Activated CD8-positive, alpha-beta T cell treated with anti-CD3 and anti-CD28 coated beads, Interleukin-2, amount 10 ng/mL, durations not matched to agents 7 days and 5 days (primary cell): ENCODE measurements at regions of chr16 and their contacts with region 1.

Region 1: GRCh38 chr16:88785106-88785924 is at the start of gene PIEZO1:
- DNase-seq: peak; percentile 83
- ATAC-seq: peak; percentile 58
- H3K4me3 Mint-ChIP-seq: peak within 1 kb of the TSS; percentile 87
- H3K27ac Mint-ChIP-seq: peak within 1 kb of the TSS; percentile 82
- H3K4me1 Mint-ChIP-seq: peaks cover 52% of the 10 kb centered on the region
- H3K27me3 Mint-ChIP-seq: no peaks in the 10 kb centered on the region
- total RNA-seq, gene PIEZO1: 226 to 230 TPM

Region 2: GRCh38 chr16:88700636-88701482 is 84.5 kb before region 1 on chr16:
- CTCF ChIA-PET with region 1: interaction called, 10 read pairs
- POLR2A ChIA-PET with region 1: interaction called, 13 read pairs
- DNase-seq: peak; percentile 98
- ATAC-seq: peak; percentile 71
- H3K4me3 Mint-ChIP-seq: peak overlapping the region; percentile 99
- H3K27ac Mint-ChIP-seq: peak overlapping the region; percentile 100
- H3K4me1 Mint-ChIP-seq: peaks cover 64% of the 10 kb centered on the region
- H3K27me3 Mint-ChIP-seq: no peaks in the 10 kb centered on the region

Region 3: DNA sequence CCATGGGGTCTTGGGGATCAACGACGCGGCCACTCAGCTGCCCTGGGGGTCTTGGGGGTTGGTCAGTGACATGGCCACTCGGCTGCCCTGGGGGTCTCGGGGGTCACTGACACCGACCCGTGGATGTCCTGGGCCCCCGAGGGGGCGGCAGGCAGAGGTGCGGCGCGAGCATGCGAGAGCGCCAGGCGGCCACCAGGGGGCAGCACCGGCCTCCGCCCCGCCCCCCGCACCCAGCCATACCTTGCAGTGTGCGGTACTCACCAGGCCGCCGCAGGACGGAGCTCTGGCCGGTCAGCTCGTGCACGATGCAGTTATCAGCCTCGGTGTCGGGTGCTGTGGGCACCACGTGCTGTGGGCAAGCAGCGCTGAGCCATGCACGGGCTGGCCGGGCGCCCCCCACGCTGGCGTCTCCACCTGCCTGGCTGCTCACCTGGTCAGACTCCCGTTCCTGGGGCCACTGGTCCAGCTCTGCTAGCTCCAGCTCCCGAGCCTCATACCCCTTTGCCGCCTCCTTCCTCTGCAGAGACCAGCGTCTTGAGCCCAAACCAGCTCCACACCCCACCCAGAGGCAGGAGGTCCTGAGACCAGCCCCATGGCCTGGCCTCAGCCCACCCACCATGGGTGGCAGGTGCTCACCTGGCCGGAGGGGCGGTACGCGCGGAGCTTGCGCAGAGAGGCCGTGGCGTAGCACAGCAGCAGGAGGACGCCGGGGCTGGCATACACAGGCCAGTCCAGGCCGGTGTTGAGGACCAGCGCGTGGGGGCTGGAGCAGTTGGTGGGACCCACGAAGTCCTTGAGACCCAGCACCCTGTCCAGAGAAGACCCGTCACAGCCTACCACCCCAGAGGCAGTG is 47.8 kb before region 1 on chr16:
- CTCF ChIA-PET with region 1: interaction called, 11 read pairs
- POLR2A ChIA-PET with region 1: no interaction called
- DNase-seq: peak; percentile 65
- ATAC-seq: peak; percentile 79
- H3K4me3 Mint-ChIP-seq: no peak overlapping the region
- H3K27ac Mint-ChIP-seq: no peak overlapping the region
- H3K4me1 Mint-ChIP-seq: no peaks in the 10 kb centered on the region
- H3K27me3 Mint-ChIP-seq: no peaks in the 10 kb centered on the region

Region 4: GRCh38 chr16:88743693-88744576 is 41.4 kb before region 1 on chr16:
- CTCF ChIA-PET with region 1: interaction called, 13 read pairs
- POLR2A ChIA-PET with region 1: interaction called, 3 read pairs
- DNase-seq: peak; percentile 74
- ATAC-seq: peak; percentile 53
- H3K4me3 Mint-ChIP-seq: no peak overlapping the region
- H3K27ac Mint-ChIP-seq: no peak overlapping the region
- H3K4me1 Mint-ChIP-seq: peaks cover 32% of the 10 kb centered on the region
- H3K27me3 Mint-ChIP-seq: no peaks in the 10 kb centered on the region

Region 5: GRCh38 chr16:88803264-88803987 is 18.1 kb after region 1 on chr16 and contains the start of gene CDT1:
- CTCF ChIA-PET with region 1: interaction called, 13 read pairs
- POLR2A ChIA-PET with region 1: interaction called, 12 read pairs
- DNase-seq: peak; percentile 86
- ATAC-seq: peak; percentile 59
- H3K4me3 Mint-ChIP-seq: peak within 1 kb of the TSS; percentile 82
- H3K27ac Mint-ChIP-seq: peak within 1 kb of the TSS; percentile 93
- H3K4me1 Mint-ChIP-seq: peaks cover 48% of the 10 kb centered on the region
- H3K27me3 Mint-ChIP-seq: no peaks in the 10 kb centered on the region
- total RNA-seq, gene CDT1: 126 to 132 TPM

Region 6: DNA sequence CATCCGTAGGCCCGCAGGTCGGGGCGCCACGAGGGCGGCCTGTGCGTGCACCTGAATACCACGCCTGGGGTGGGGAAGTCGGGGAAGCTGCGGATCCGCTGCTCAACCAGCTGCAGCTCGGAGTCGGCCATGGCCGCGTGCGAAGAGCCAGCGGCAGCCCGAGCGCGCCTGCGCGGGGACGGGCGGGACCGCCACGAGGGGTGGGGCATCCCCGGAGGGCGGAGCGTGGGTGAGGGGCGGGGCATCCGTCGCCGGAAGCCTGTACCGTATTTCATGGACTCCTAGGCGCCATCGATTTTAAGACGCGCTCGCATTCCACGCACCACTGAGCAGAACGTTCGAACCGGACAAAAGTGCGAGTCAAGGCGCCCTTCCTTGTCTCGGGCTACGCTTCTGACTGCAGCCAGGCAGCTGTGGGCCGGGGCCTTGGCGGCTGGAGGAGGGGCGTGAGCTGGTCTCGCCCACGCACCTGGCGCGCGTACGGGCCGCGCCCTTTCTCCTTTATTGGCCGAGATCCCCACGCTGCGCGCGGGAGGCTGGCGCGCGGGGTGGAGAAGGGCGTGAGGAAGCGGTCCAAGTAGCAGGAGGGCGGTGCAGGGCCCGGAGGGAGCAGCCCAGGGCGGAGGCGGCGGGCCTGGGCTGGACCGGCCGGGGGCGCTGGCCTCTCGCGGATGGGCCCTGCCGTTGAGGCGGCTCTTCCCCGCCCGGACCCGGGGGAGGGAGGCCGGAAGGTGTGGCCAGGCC is 26.6 kb after region 1 on chr16 and contains the start of gene APRT:
- CTCF ChIA-PET with region 1: interaction called, 14 read pairs
- POLR2A ChIA-PET with region 1: interaction called, 6 read pairs
- DNase-seq: peak; percentile 97
- ATAC-seq: peak; percentile 84
- H3K4me3 Mint-ChIP-seq: peak within 1 kb of the TSS; percentile 85
- H3K27ac Mint-ChIP-seq: peak within 1 kb of the TSS; percentile 97
- H3K4me1 Mint-ChIP-seq: peaks cover 32% of the 10 kb centered on the region
- H3K27me3 Mint-ChIP-seq: no peaks in the 10 kb centered on the region
- total RNA-seq, gene APRT: 140 to 141 TPM